ENCODE measurements at regions of chr7 and their contacts with region 1.

Region 1: DNA sequence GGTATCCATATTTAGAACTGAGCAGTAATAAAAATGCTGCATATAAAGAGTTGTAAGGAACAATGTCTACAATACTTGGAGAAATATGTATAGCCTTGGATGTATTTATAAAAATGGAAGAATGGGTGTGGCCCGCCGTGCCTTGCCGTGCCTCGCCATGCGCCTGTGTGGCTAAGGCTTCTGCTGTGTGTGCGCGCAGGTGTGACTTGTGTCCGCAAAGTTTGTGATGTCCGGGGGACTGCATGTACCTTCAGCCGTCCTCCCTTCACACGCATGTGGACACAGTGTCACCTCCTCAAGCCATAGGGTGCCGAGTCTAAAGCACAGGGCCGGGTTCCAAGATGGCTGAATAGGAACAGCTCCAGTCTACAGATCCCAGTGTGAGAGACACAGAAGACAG is 9.8 kb downstream of the SAMD9 start:
- DNase-seq: no peak
- ATAC-seq: no peak
- H3K4me3 ChIP-seq: peak overlapping the region in 1 of 2 donors; percentile 32
- H3K4me3 Mint-ChIP-seq: no peak overlapping the region
- H3K27ac ChIP-seq: no peak overlapping the region
- H3K27ac Mint-ChIP-seq: no peak overlapping the region
- H3K4me1 ChIP-seq: no peaks in the 10 kb centered on the region
- H3K4me1 Mint-ChIP-seq: peaks cover 19 to 30% (median 20%) of the 10 kb centered on the region in 3 donors
- H3K27me3 ChIP-seq: no peaks in the 10 kb centered on the region
- H3K27me3 Mint-ChIP-seq: no peaks in the 10 kb centered on the region

Region 2: GRCh38 chr7:92633211-92633906 is 474.6 kb before region 1 on chr7:
- CTCF ChIA-PET with region 1: no interaction called
- POLR2A ChIA-PET with region 1: interaction called in 1 of 2 experiments, 11 read pairs
- DNase-seq: peak in 1 of 35 experiments; percentile 47
- ATAC-seq: peak; percentile 57 to 91 (median 81)
- H3K4me3 ChIP-seq: no peak overlapping the region
- H3K4me3 Mint-ChIP-seq: no peak overlapping the region
- H3K27ac ChIP-seq: no peak overlapping the region
- H3K27ac Mint-ChIP-seq: peak overlapping the region; percentile 55 to 58
- H3K4me1 ChIP-seq: peaks cover 3 to 4% of the 10 kb centered on the region in 2 experiments
- H3K4me1 Mint-ChIP-seq: peaks cover 37 to 52% (median 47%) of the 10 kb centered on the region in 3 donors
- H3K27me3 ChIP-seq: no peaks in the 10 kb centered on the region
- H3K27me3 Mint-ChIP-seq: no peaks in the 10 kb centered on the region

Region 3: GRCh38 chr7:93011351-93012294 is 96.4 kb before region 1 on chr7:
- CTCF ChIA-PET with region 1: no interaction called
- POLR2A ChIA-PET with region 1: no interaction called
- DNase-seq: no peak
- ATAC-seq: no peak
- H3K4me3 ChIP-seq: no peak overlapping the region
- H3K4me3 Mint-ChIP-seq: no peak overlapping the region
- H3K27ac ChIP-seq: no peak overlapping the region
- H3K27ac Mint-ChIP-seq: no peak overlapping the region
- H3K4me1 ChIP-seq: peaks cover 0 to 3% of the 10 kb centered on the region in 2 experiments
- H3K4me1 Mint-ChIP-seq: peaks cover 7 to 10% (median 8%) of the 10 kb centered on the region in 3 donors
- H3K27me3 ChIP-seq: no peaks in the 10 kb centered on the region
- H3K27me3 Mint-ChIP-seq: peaks cover 3 to 4% of the 10 kb centered on the region in 2 donors